ENCODE measurements at regions of chr1 and their contacts with region 1.

Region 1: DNA sequence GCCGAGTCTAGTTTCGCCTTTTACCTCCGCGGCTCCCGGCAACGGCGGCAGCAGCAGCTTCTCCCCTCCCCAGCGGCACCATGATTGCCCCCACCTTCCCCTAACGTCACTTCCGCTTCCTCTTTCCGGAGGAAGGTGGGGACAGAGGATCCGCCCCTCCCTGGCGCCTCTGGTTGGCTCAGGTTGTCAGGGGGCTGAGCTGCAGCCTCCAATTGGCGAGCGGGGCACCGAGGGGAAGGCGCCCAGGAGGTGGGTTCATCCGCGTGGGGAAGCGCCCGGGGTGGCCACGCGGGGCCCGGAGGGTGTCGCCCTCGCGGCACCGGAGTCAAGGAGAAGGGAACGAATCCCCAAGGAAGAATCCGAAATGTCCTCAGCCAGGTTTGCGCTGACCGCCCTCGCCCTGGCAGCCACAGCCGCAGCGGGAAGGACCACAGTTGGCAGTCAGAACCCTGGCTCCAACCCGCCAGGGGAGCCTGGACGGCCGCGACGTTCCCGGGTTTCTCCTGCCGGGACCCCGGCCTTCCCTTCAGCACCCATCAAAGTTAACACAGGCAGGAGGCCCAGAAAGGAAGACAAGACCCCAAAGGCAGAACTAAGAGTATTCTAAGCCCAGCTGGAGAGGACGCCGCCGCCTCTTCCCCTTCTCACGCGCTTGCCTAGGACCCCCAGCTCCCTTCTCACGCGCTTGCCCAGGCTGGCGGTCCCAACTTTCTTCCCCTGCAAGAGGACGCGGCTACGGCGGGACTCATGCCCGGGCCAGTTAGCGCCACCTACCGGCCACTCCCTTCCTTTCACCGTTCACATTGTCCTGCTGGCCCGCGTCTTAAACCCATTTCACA is at the start of gene MTF1:
- DNase-seq: peak; percentile 98
- H3K4me3 ChIP-seq: peak within 1 kb of the TSS; percentile 85
- H3K27ac ChIP-seq: peak within 1 kb of the TSS; percentile 84
- H3K4me1 ChIP-seq: no peaks in the 10 kb centered on the region
- H3K27me3 ChIP-seq: no peaks in the 10 kb centered on the region
- CTCF ChIP-seq: peak; percentile 91
- total RNA-seq, gene MTF1: 22.1 to 33.9 TPM

Region 2: GRCh38 chr1:37602750-37603694 is 256.7 kb before region 1 on chr1:
- intact Hi-C with region 1: loop called (anchors 10 kb)
- DNase-seq: no peak
- H3K4me3 ChIP-seq: no peak overlapping the region
- H3K27ac ChIP-seq: no peak overlapping the region
- H3K4me1 ChIP-seq: no peaks in the 10 kb centered on the region
- H3K27me3 ChIP-seq: no peaks in the 10 kb centered on the region
- CTCF ChIP-seq: peak; percentile 59

Region 3: DNA sequence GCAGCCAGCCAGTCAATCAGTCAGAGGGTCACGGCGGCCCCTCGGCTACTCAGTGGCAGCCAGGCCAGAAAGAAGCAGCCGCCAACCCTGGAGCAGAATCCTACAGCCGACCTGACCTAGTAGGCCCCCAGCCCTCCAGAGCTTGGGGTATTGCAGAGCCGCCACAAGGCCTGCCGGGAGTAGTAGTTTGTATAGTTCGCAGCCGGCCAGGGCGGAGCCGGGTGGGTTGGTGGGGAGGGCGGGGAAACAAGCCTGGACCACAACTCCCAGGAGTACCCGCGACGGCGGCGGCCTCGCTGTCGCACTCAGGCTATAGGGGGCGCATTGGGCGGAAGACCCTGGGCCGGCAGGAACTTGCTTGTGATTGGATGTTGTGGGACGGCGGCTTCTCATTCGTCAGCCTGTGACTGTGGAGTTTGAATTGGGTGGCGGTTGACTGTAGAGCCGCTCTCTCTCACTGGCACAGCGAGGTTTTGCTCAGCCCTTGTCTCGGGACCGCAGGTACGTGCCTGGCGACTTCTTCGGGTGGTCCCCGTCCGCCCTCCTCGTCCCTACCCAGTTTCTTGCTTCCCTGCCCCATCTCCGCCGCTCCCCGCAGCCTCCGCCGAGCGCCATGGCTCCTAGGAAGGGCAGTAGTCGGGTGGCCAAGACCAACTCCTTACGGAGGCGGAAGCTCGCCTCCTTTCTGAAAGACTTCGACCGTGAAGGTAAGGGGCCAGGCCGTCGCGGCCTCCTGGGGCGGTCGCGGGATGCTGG is 167.5 kb before region 1 on chr1 and contains the start of gene CDCA8:
- intact Hi-C with region 1: loop called (anchors 5 kb)
- DNase-seq: peak; percentile 99
- H3K4me3 ChIP-seq: peak within 1 kb of the TSS; percentile 91
- H3K27ac ChIP-seq: peak within 1 kb of the TSS; percentile 63
- H3K4me1 ChIP-seq: peaks cover 25% of the 10 kb centered on the region
- H3K27me3 ChIP-seq: no peaks in the 10 kb centered on the region
- CTCF ChIP-seq: peak; percentile 54
- total RNA-seq, gene CDCA8: 14.9 to 44.5 TPM

Region 4: DNA sequence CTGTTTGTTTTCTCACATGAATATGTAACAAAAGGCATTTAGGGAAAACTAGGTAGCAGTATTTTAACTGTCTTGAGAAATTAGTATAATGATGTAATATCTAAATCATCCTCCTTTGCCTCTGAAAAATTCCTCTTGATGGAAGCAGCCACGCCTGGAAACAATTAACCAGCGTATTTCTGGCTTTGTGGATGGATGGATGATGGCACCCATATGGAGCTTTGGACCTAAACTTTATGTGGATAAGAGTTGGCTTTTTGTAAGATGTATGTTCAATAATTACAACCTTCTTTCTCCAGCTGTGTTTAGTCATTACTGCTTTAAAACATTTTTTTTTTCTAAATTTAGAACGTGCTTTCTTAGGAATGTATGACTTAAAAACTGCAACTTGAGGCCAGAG is 154.8 kb before region 1 on chr1:
- intact Hi-C with region 1: no loop called
- DNase-seq: no peak
- H3K4me3 ChIP-seq: no peak overlapping the region
- H3K27ac ChIP-seq: no peak overlapping the region
- H3K4me1 ChIP-seq: no peaks in the 10 kb centered on the region
- H3K27me3 ChIP-seq: no peaks in the 10 kb centered on the region
- CTCF ChIP-seq: no peak

Measured in colonic mucosa (tissue), 4 donors.